ENCODE measurements at regions of chr11 and their contacts with region 1.

Region 1: DNA sequence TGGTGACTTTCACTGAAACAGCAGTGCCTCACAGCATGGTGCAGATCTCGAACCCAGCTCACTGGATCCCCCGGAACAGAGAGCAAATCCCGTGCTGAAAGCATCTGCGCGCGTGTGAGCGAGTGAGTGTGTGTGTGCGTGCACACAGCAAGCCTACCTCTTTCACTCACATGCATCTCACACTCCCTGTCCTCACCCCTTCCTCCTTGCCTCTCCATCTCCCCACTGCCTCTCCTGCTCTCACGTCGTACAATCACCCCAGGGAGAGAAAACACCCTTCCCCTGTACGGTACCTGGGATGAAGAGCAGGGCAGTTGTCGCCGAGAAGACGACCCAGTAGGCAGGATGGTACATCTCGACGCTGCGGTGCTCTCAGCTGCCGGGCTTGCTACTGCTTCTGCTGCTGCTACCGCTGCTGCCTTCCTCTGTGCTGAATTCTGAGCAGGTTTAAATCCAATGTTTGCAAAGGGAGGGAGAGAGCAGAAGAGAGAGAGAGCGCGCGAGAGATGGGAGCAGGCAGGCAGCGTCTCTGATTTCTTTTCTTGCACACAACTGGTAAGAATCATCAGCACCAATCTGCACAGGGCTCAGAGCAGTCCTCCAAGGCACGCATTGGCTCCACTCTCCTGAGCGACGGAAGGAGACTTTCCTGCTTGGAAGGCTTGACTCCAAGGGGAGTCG is at the start of gene OPCML:
- DNase-seq: peak; percentile 26
- ATAC-seq: peak; percentile 41
- H3K4me3 Mint-ChIP-seq: peak within 1 kb of the TSS; percentile 85
- H3K27ac Mint-ChIP-seq: 0 out of 2 replicates have a peak within 1 kb of the TSS, but pooled peaks have one; percentile 4
- H3K4me1 Mint-ChIP-seq: peaks cover 75% of the 10 kb centered on the region
- H3K27me3 Mint-ChIP-seq: peaks cover 30% of the 10 kb centered on the region
- CTCF ChIP-seq: no peak
- total RNA-seq, gene OPCML: 1.5 to 1.8 TPM (median 1.7 TPM) in 3 replicates

Region 2: GRCh38 chr11:133476570-133477255 is 55.4 kb before region 1 on chr11:
- CTCF ChIA-PET with region 1: no interaction called
- POLR2A ChIA-PET with region 1: no interaction called
- DNase-seq: peak; percentile 29
- ATAC-seq: peak; percentile 76
- H3K4me3 Mint-ChIP-seq: no peak overlapping the region
- H3K27ac Mint-ChIP-seq: no peak overlapping the region
- H3K4me1 Mint-ChIP-seq: peaks cover 25% of the 10 kb centered on the region
- H3K27me3 Mint-ChIP-seq: no peaks in the 10 kb centered on the region
- CTCF ChIP-seq: no peak

Region 3: DNA sequence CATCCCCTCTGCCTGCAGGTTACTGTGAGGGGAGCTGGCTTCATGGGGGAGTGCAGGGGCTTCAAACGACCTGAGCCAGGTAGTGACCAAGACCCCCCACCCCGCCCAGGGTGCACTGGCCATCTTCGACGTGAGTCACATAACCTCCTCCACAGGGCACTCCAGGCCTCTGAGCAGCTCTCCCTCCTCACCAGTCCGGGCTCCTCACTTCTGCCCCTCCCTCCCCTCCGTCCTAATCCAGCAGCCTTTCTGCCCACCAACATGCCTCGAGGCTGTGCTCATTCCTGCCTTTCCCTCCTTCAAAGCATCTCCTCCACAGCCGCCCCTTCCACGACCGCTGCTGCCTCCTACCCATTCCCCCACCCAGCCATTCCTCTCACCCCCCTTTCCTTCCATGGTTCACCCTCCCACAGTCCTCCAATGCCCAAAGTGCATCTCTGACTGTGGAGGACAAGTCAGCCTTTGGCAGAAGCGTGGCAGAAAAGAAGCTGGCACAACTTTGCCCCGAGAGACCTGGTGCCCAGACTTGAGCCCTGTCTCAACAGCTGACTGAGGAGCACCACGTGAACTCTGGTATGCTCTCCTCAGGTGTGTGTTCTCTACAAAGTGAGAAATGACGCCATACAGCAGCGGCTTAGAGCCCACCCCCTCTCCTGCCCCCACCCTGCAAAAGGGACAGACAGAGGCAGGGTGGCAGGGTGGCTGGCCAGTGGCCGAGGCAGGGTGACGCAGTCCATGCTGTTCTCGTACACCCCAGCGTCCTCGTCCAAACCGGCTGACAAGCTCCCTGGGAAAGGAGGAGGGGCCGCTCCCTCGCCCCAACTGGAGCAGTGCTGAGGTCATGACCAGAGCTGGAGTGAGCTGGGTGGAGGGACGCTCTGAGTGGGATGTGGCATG is 30.2 kb before region 1 on chr11:
- CTCF ChIA-PET with region 1: interaction called, 12 read pairs
- POLR2A ChIA-PET with region 1: no interaction called
- DNase-seq: no peak
- ATAC-seq: peak; percentile 54
- H3K4me3 Mint-ChIP-seq: no peak overlapping the region
- H3K27ac Mint-ChIP-seq: no peak overlapping the region
- H3K4me1 Mint-ChIP-seq: peaks cover 44% of the 10 kb centered on the region
- H3K27me3 Mint-ChIP-seq: peaks cover 2% of the 10 kb centered on the region; the same call in 1 of the 2 replicates
- CTCF ChIP-seq: no peak

Region 4: DNA sequence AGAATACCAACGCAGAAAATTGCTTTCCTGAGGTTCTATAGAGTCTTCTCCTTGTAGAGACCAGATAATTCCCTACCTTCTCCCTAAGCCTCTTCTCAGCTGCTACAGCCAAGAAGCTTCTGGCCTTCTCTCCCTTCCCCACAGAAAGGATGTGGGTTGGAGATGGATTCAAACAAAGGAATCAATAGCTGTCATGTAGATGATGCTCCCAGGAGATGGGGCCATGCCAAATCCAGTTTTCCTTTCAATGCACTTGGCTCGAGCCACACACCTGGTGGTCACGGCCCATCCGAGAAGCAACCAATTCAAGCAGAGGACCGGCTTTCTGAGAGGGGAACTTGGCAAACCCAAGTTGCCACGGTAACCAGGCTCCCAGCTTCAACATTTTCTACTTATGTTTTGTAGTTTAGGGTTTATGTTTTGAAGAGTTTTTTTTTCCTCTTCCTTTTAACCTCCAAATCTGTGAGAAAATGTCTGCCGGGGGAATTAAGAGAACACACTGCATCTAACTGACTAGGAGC is 31.5 kb after region 1 on chr11:
- CTCF ChIA-PET with region 1: no interaction called
- POLR2A ChIA-PET with region 1: no interaction called
- DNase-seq: no peak
- ATAC-seq: no peak
- H3K4me3 Mint-ChIP-seq: no peak overlapping the region
- H3K27ac Mint-ChIP-seq: no peak overlapping the region
- H3K4me1 Mint-ChIP-seq: peaks cover 9% of the 10 kb centered on the region
- H3K27me3 Mint-ChIP-seq: no peaks in the 10 kb centered on the region
- CTCF ChIP-seq: no peak

Measured in WTC11 (cell line).